ENCODE measurements at regions of chr5 and their contacts with region 1.

Region 1: GRCh38 chr5:160021831-160022446 is 13.0 kb downstream of the TTC1 start:
- DNase-seq: no peak

Region 2: DNA sequence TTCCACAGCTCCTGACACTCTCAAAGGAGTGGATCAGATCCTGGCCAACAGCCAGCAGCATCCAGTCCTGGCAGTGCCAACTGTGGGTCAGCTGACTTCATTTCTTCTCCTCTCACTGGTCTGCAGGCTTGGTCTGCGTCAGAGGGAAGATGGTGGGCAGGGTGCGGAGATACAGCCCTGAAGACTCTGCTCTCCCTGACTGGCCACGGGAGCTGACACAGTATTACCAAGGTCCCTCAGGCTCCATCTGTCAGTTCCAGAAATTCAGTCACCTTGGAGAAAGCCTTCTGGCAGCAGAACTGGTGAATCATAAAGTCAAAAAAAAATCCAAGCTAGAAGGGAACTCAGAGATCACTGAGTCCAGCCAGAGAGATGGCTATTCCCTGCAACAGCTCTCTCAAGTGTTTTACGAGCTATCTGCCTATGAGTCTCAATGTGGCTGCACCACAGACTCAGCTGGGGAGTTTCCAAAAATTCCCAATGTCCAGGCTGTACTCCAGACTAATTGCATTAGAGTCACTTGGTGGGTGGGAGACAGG is 320.5 kb after region 1 on chr5:
- intact Hi-C with region 1: loop called (anchors 5 kb)
- DNase-seq: no peak

Region 3: GRCh38 chr5:160399402-160400353 is 377.7 kb after region 1 on chr5 and contains the start of gene FAM200C:
- intact Hi-C with region 1: loop called in 1 of 2 experiments (anchors 10 kb)
- DNase-seq: peak; percentile 97
- total RNA-seq, gene FAM200C: 4.1 to 4.8 TPM

Measured in posterior vena cava (tissue), 2 donors.